Dendritic cell treated with granulocyte-macrophage colony-stimulating factor and Interleukin-4, amounts not matched to agents 40 ng/mL and 50 ng/mL, for 4 days (primary cell): ENCODE measurements at regions of chr10 and their contacts with region 1.

Region 1: GRCh38 chr10:79195091-79195923 is 126.5 kb downstream of the ZMIZ1 start:
- H3K4me3 Mint-ChIP-seq: no peak overlapping the region
- H3K27ac Mint-ChIP-seq: no peak overlapping the region
- H3K4me1 Mint-ChIP-seq: peaks cover 47% of the 10 kb centered on the region
- H3K27me3 Mint-ChIP-seq: no peaks in the 10 kb centered on the region

Region 2: DNA sequence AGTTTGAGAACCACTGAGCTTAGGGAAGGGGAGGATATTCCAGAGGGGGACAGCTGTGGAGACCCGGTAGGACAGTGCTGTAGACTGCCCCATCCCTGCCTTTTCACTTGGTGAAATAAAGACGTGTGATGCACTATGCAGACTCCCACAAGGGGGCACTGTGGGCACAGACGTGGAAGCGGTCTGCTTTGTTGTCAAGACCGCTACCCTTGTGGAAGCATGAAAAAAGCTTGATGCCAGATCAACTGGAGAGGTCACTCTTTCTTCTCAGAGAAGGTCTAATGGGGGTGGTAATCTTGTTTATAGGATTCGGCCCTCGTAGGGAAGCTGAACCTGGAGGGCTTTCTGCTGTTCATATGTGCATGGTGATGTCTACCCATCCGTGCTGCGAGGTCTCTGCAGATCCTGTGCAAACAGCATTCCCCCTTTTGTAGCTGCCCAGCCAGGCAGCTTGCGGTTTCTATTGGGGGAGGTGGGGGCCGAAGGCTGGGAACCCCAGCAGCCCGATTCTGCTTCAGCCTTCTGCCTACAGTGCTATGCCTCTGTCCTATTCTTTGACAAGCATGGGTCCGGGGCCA is 1147.9 kb before region 1 on chr10:
- intact Hi-C with region 1: loop called (anchors 5 kb)
- H3K4me3 Mint-ChIP-seq: no peak overlapping the region
- H3K27ac Mint-ChIP-seq: no peak overlapping the region
- H3K4me1 Mint-ChIP-seq: peaks cover 44% of the 10 kb centered on the region
- H3K27me3 Mint-ChIP-seq: no peaks in the 10 kb centered on the region

Region 3: GRCh38 chr10:78211561-78212051 is 983.7 kb before region 1 on chr10:
- intact Hi-C with region 1: loop called (anchors 10 kb)
- H3K4me3 Mint-ChIP-seq: no peak overlapping the region
- H3K27ac Mint-ChIP-seq: no peak overlapping the region
- H3K4me1 Mint-ChIP-seq: peaks cover 16% of the 10 kb centered on the region
- H3K27me3 Mint-ChIP-seq: peaks cover 17% of the 10 kb centered on the region

Region 4: DNA sequence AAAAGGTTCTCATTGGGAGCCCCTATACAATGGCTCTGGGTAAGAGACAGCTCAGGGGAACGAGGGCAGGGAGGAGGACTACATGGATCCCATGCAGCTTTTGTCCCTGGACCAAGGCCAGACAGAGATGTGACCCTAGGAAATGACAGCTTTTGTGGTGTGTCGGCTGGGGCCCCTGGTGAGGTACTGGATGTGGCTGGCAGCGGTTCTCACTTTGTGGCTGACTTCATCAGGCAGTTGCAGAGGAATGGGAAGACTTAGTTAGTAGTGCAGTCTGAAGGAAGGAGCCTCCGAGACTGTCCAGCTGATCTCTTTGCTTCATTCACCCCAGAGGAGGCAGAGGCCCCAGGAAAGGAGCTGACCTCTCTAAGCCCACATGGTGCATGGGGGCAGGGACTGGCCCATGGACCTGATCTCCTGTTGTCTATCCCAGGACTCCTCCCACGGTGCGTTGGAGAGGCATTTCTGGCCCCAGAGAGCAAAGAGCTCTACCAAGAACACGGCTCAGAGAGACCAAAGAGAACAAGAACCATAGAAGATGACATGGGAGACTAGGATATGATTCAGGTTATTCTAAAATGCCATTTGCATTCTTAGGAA is 958.8 kb before region 1 on chr10:
- intact Hi-C with region 1: no loop called
- H3K4me3 Mint-ChIP-seq: no peak overlapping the region
- H3K27ac Mint-ChIP-seq: no peak overlapping the region
- H3K4me1 Mint-ChIP-seq: peaks cover 7% of the 10 kb centered on the region
- H3K27me3 Mint-ChIP-seq: no peaks in the 10 kb centered on the region

Region 5: GRCh38 chr10:78664929-78665553 is 530.3 kb before region 1 on chr10:
- intact Hi-C with region 1: loop called (anchors 2 kb)
- H3K4me3 Mint-ChIP-seq: no peak overlapping the region
- H3K27ac Mint-ChIP-seq: no peak overlapping the region
- H3K4me1 Mint-ChIP-seq: no peaks in the 10 kb centered on the region
- H3K27me3 Mint-ChIP-seq: peaks cover 32% of the 10 kb centered on the region

Region 6: DNA sequence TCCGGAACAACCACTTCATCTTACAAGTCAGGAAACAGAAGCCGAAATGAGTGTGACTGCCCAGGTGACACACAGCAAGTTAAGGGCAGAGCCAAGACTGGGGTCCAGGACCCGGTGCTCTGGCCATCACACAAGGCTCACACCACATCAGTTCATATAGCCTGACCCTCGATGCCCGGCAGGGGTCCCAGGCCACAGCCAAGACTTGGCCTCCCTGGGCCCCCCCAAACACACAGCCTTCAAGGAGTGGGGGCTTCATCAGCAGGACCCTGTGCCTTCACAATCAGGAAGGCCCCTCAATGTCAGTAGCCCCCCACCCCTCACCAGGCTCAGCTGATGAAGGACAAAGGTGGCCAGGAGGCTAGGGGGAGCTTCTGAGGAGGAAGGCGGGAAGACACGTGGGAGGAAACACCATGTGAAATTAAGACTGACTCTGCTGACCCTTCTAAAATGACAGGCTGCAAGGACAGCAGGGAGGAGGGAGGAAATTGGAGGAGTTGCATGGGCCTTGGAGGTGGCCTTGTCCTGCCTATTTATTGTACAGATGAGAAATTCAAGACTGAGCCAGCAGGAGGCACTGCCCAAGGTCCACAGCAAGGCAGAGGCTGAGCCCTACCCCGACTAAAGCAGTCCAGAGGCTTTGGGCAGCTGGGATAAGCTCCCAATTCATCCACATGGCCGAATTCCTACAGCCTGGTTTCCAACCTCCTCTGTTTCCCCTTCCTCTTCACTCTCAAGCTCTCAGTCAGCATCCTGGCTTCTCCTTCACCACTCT is 342.7 kb before region 1 on chr10:
- intact Hi-C with region 1: loop called (anchors 1 kb)
- H3K4me3 Mint-ChIP-seq: no peak overlapping the region
- H3K27ac Mint-ChIP-seq: no peak overlapping the region
- H3K4me1 Mint-ChIP-seq: no peaks in the 10 kb centered on the region
- H3K27me3 Mint-ChIP-seq: peaks cover 10% of the 10 kb centered on the region

Region 7: DNA sequence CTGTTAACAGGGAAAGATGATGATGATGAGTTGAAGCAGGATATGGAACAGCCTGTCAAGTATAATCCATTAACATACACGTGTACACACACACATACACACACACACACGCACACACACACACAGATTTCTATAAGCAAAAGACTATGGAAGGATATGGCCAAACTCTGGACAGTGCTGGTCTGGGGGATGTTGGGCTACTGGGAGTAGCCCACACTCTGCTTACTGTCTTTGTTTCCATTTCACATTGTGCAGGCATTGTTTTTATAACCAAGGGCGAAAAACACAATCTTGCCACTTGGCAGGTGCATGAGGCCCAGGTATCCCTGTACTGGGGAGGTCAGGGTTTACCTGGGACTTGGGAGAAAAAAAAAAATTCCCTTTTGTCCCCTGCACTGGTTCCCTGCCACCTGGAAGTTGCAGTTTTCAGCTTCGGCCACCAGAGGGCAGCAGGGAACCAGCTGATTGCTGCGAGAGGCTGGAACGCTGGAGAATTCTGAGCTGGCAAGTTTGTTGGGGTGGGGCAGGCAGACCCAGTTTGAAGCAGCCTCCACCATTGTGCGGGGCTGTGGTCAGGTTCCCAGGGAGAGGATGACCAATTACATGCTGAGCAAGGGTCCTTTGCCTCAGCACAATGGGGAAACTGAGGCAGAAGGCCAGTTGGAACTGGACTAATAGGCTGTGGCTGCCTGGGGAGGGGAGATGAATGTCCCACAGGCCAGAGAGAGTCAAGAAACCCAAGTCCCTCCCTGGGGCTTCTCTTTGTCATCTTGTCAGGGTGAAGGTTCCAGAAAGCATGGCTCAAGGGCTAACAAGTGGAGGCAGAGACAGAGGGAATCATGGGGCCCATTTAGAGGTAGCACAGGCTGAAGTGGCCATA is 179.2 kb after region 1 on chr10:
- intact Hi-C with region 1: no loop called
- H3K4me3 Mint-ChIP-seq: no peak overlapping the region
- H3K27ac Mint-ChIP-seq: no peak overlapping the region
- H3K4me1 Mint-ChIP-seq: peaks cover 5% of the 10 kb centered on the region
- H3K27me3 Mint-ChIP-seq: peaks cover 3% of the 10 kb centered on the region

Region 8: DNA sequence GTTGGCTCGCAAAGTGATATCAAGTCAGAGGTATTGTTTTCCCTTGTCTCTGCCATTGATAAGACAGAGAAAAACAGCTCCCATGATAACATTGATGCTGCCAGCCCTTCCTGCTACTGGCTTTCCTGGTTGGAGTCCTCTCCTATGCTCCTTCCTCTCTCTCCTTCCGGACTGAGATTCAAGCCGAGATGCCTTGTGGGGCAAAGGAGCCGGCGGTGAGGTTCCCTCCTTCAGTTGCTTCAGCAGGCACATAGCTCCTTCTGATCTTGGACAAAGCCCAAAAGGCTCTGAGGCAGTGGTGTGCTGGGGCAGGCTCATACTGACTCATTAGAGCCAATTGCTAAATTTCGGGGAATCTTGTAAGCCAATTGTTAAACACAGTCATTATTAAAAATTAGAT is 259.0 kb after region 1 on chr10:
- intact Hi-C with region 1: no loop called
- H3K4me3 Mint-ChIP-seq: no peak overlapping the region
- H3K27ac Mint-ChIP-seq: no peak overlapping the region
- H3K4me1 Mint-ChIP-seq: no peaks in the 10 kb centered on the region
- H3K27me3 Mint-ChIP-seq: peaks cover 20% of the 10 kb centered on the region